ENCODE measurements at regions of chr3 and their contacts with region 1.

Region 1: DNA sequence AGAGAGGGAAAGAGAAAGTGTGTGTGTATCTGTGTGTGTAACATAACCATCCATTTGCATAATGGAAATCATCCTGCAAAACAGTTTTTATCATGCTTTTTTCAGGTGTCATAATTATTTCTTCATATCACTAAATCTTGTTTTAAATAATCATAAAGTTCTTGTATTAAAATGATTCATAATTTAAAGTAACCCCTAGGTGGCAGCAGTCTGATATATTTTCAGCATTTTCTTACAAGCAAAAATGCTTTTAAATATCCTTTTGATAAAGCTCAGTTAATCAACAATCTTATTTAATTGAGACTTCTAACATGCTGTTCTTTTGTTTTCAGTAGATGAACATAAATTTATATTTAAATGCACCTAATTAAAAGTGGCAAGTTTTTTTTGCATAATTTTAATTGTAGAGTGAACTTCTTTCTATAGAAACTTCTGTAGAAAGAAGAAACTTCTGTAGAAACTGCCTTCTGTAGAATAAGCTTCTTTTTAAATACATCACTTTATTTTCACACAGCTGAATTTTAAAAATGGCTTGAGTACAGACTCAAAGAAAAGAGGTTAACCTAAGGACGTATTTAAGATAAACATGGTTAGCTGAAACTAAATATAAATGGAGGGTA is 72.5 kb downstream of the OPA1 start:
- DNase-seq: no peak
- ATAC-seq: no peak
- H3K4me3 ChIP-seq: no peak overlapping the region
- H3K27ac ChIP-seq: no peak overlapping the region
- H3K4me1 ChIP-seq: no peaks in the 10 kb centered on the region
- H3K27me3 ChIP-seq: no peaks in the 10 kb centered on the region
- CTCF ChIP-seq: peak; percentile 48

Region 2: GRCh38 chr3:193701904-193702635 is 36.6 kb after region 1 on chr3:
- intact Hi-C with region 1: no loop called
- DNase-seq: no peak
- ATAC-seq: no peak
- H3K4me3 ChIP-seq: no peak overlapping the region
- H3K27ac ChIP-seq: no peak overlapping the region
- H3K4me1 ChIP-seq: no peaks in the 10 kb centered on the region
- H3K27me3 ChIP-seq: no peaks in the 10 kb centered on the region
- CTCF ChIP-seq: no peak

Region 3: GRCh38 chr3:194344012-194344411 is 678.5 kb after region 1 on chr3:
- intact Hi-C with region 1: loop called in 1 of 2 experiments (anchors 10 kb)
- DNase-seq: peak; percentile 71 to 83
- ATAC-seq: peak; percentile 64 to 84 (median 70)
- H3K4me3 ChIP-seq: no peak overlapping the region
- H3K27ac ChIP-seq: no peak overlapping the region
- H3K4me1 ChIP-seq: no peaks in the 10 kb centered on the region
- H3K27me3 ChIP-seq: no peaks in the 10 kb centered on the region
- CTCF ChIP-seq: peak; percentile 94

Measured in psoas muscle (tissue), 8 donors.